ENCODE measurements at regions of chr12 and their contacts with region 1.

Region 1: DNA sequence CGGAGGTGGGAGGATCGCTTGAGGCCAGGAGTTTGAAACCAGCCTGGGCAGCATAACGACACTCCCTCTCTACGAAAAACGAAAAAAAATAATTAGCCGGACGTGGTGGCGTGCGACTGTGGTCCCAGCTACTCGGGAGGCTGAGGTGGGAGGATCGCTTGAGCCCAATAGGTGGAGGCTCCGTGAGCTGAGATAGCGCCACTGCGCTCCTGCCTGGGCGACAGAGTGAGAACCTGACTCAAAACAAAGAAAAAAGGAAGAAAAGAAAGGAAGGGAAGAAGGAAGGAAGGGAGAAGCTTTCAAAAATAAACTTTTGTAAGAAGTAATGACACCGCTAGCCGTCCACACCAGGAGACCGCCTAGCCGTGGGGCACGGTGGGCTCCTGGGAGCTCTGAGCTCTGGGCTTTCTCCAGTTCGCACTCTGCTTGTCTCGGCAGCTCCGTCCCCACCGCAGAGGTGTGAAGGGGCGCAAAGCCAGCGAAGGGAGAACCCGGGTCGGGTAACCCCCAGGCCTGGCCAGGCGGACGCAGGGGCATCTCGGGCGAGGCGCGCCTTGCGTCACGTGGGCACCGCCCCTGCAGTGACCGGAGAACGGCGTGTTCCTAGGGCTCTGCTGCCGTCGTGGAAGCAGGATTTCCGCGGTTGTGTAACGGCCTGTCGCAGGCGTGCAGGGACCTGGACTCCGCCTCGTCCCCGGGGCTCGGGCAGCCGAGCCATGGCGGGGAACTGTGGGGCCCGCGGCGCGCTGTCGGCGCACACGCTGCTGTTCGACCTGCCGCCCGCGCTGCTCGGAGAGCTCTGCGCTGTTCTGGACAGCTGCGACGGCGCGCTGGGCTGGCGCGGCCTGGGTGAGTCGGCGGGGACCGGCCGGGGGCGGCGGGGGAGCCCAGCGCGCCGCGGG is at the start of gene IRAK3:
- DNase-seq: peak; percentile 55
- H3K4me3 ChIP-seq: peak within 1 kb of the TSS; percentile 37 to 43
- H3K27ac ChIP-seq: peak within 1 kb of the TSS; percentile 63 to 76
- H3K4me1 ChIP-seq: no peaks in the 10 kb centered on the region
- H3K27me3 ChIP-seq: no peaks in the 10 kb centered on the region
- CTCF ChIP-seq: no peak
- POLR2A ChIP-seq: peak; percentile 65
- total RNA-seq, gene IRAK3: 4.5 to 9.5 TPM

Region 2: GRCh38 chr12:66235626-66236281 is 46.9 kb after region 1 on chr12:
- intact Hi-C with region 1: loop called (anchors 10 kb)
- DNase-seq: no peak
- H3K4me3 ChIP-seq: peak overlapping the region; percentile 36 to 41
- H3K27ac ChIP-seq: peak overlapping the region; percentile 27 to 33
- H3K4me1 ChIP-seq: no peaks in the 10 kb centered on the region
- H3K27me3 ChIP-seq: no peaks in the 10 kb centered on the region
- CTCF ChIP-seq: no peak
- POLR2A ChIP-seq: no peak

Region 3: DNA sequence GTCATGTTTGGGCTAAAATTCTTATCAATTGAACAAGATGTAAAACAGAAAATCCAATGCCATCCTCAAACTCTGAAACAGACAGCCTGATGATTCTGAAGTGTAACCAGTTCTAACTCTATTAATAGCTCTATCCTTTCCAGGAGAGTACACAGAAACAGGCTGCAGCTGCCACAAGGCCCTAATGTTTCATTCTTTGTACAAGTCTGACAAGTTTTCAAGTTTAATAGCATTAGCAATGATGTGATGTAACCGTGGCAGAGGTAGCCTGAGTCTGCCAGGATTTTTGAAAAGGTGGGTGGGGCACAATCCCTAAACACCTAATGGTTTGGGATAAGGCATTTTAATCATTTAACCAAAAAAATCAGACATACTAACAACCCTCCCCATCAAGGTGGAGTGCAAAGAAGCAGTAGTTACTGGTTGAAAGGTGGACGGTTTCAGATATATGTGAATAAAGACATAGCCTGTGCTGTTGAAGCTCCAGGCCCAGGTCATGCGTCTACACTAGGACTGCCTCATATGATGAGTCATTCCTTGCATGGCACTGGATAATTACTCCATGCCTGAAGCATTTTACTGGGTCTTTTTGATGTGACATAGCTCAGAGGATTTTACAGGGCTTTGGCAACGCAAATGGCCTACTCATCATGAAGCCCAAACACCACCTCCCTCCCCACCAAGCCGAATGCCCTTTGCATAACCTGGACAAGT is 635.2 kb after region 1 on chr12:
- intact Hi-C with region 1: no loop called
- DNase-seq: peak; percentile 62
- H3K4me3 ChIP-seq: no peak overlapping the region
- H3K27ac ChIP-seq: peak overlapping the region; percentile 61 to 69
- H3K4me1 ChIP-seq: no peaks in the 10 kb centered on the region
- H3K27me3 ChIP-seq: no peaks in the 10 kb centered on the region
- CTCF ChIP-seq: no peak
- POLR2A ChIP-seq: no peak

Region 4: DNA sequence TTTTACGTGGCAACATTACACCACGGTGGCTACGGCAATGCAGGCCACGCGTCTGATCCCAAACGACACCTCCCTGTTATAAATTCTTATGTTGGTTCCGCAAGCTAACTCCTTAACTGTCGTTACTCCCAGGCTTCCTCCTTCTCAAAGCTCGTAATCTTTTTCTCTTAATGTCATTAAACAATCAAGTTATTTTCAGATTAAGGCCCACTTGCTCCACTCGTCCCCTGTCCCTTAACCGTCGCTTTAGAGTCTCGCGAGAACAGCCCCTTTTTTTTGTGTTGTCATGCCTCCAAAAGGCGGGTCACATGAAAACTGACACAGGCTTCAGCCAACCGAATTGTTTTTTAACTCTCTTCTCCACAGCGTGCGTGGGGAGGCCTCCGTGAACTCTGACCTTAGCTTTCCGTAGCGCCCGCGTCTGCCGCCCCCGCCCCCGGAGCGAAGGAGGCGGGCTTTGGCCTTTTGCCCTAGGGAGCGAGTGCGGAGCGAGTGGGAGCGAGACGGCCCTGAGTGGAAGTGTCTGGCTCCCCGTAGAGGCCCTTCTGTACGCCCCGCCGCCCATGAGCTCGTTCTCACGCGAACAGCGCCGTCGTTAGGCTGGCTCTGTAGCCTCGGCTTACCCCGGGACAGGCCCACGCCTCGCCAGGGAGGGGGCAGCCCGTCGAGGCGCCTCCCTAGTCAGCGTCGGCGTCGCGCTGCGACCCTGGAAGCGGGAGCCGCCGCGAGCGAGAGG is 1080.2 kb after region 1 on chr12 and contains the start of gene CAND1:
- intact Hi-C with region 1: loop called (anchors 10 kb)
- DNase-seq: peak; percentile 98
- H3K4me3 ChIP-seq: peak within 1 kb of the TSS; percentile 67 to 88
- H3K27ac ChIP-seq: peak within 1 kb of the TSS; percentile 98 to 99
- H3K4me1 ChIP-seq: no peaks in the 10 kb centered on the region
- H3K27me3 ChIP-seq: no peaks in the 10 kb centered on the region
- CTCF ChIP-seq: no peak
- POLR2A ChIP-seq: peak; percentile 90
- total RNA-seq, gene CAND1: 65.1 to 118 TPM

Measured in prostate gland (tissue), 2 donors.